ENCODE measurements at regions of chr10 and their contacts with region 1.

Region 1: GRCh38 chr10:6382081-6382480 is 179.3 kb downstream of the PFKFB3 start:
- DNase-seq: peak; percentile 73

Region 2: GRCh38 chr10:6202684-6203330 is 179.3 kb before region 1 on chr10 and contains the start of gene PFKFB3:
- in situ Hi-C with region 1: loop called (anchors 25 kb)
- DNase-seq: peak; percentile 94

Region 3: DNA sequence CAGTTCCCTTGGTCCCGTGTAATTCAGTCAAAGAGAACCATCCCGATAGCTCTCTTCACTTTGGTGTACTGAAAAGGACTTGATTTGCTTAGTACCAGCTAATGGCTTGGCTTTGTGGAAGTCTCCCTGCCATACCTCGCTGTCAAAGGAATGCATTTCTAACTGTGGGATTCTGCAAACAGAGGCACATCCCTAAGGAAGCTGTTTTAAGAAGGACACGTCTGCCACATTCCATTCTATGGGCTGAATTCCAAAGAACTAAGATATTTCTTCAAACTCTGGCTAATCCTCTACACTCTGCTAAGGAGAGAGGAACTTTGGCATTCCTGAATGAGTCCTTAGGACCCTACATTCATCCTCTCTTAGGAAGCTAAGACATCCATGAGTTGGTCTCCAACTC is 700.9 kb after region 1 on chr10:
- in situ Hi-C with region 1: no loop called
- DNase-seq: no peak

Measured in KBM-7 (cell line).